ENCODE measurements at regions of chr5 and their contacts with region 1.

Region 1: DNA sequence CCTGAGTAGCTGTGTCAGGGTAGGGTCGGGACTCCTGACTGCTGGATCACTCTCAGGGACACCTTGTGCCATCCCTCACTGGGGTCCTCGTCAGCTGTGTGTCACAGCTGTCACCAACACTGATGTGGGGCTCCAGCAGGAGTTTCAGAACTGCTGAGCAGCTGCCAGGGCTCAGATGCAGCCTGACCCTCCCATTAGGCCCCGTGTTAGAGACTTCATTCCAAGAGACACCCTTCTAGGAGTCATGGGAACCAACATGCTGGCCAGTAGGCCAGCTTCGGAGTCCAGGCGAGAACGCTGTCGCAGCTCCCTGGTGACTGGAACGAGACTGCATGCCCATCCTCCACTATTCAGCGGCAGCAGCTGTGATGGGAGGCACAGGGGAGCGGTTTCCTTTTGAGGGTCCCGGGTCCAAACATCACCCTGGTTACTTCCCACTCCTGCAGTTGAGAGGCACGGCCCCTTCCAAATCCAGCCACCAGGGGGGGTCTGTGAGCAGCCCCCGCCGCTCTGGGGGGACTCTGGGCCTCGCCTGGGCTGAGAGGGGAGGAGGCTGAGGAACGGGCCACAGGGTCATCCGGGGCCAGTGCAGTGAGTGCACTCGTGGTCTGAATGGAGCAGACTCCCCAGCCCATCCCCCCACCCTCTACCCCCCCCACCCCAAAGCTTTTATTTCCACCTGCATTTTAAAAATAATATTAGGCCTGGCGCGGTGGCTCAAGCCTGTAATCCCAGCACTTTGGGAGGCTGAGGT is 12.6 kb upstream of the TCF7 start:
- DNase-seq: peak; percentile 62 to 77 (median 73)
- H3K4me3 ChIP-seq: no peak overlapping the region
- H3K4me3 Mint-ChIP-seq: peak overlapping the region in 6 of 8 donors; percentile 10 to 62 (median 36)
- H3K27ac ChIP-seq: peak overlapping the region; percentile 85
- H3K27ac Mint-ChIP-seq: peak overlapping the region; percentile 59 to 96 (median 88)
- H3K4me1 ChIP-seq: peaks cover 95% of the 10 kb centered on the region
- H3K4me1 Mint-ChIP-seq: peaks cover 62 to 98% (median 82%) of the 10 kb centered on the region in 4 donors
- H3K27me3 ChIP-seq: no peaks in the 10 kb centered on the region
- H3K27me3 Mint-ChIP-seq: no peaks in the 10 kb centered on the region

Region 2: DNA sequence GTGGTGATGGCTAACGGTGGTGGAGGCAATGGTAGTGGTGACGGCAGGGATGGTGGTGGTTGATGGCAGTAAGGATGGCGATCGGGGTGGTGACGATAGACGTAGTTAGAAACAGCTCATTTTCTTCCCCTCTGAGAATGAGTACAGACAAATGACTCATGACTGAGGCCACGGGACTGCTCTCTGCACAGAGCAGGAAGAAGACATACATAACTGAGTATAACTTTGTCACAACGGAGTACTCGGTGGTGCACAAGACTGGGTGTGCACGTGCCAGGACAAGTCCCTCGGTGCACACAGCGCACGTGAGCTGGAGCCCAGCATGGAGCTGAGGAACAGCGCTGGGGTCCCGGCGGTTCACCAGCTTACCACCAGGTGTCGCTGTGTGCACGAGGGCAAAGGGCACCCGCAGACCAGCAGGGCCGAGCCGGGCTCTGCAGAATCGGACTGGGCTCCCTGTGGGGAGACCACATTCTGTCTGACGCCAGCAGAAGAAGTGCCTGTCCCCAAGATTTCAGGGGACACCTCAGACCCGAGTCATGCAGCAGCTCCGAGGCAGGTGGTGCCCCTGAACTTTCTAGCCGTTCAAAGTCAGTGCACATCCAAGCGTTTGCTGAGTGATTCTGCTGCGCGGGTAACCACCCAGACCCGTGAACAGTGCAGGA is 678.1 kb before region 1 on chr5:
- CTCF ChIA-PET with region 1: no interaction called
- POLR2A ChIA-PET with region 1: no interaction called
- intact Hi-C with region 1: no loop called
- DNase-seq: peak; percentile 47 to 57 (median 53)
- H3K4me3 ChIP-seq: no peak overlapping the region
- H3K4me3 Mint-ChIP-seq: peak overlapping the region in 1 of 8 donors; percentile 29
- H3K27ac ChIP-seq: no peak overlapping the region
- H3K27ac Mint-ChIP-seq: no peak overlapping the region
- H3K4me1 ChIP-seq: peaks cover 8% of the 10 kb centered on the region
- H3K4me1 Mint-ChIP-seq: peaks cover 6 to 9% (median 7%) of the 10 kb centered on the region in 4 donors
- H3K27me3 ChIP-seq: no peaks in the 10 kb centered on the region
- H3K27me3 Mint-ChIP-seq: peaks cover 7 to 10% of the 10 kb centered on the region in 2 donors

Region 3: DNA sequence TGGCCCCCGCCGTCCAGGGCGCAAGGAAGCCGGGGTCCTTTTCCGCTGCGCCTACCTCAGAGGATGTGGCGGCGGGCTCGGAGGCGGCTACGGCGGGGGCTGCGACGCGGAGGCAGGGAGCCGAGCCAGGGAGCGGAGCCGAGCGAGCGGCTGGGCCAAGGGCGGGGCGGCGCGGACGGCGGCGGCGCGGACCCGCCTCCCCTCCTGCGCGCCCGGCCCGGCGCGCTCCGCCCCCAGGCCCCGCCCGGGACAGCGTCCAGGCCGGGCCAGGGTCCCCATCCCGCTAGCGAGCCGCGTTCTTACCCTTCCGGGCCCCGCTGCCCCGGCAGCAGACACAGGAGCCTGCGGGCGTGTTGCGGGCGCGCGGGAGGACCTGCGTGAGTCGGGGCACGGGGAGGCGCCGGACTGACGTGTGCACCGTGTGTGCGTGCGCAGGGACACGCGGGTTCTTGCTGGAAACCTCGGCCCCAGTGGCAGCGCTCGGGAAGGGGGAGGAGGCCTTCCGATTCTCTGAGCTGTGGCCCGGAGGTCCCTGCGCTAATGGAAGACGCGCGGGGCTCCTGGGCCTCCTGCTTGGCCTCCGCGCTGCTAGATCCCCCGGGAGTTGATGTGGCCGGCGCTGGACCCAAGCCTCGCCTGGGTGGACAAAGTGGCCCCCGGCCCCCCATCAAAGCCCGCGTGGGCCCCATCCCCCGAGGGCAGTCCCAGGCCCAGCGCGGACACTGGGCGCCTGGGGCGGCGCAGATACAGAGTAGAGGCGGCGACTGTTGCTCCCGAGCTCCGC is 97.1 kb before region 1 on chr5 and contains the start of gene VDAC1:
- CTCF ChIA-PET with region 1: no interaction called
- POLR2A ChIA-PET with region 1: interaction called, 16 read pairs
- intact Hi-C with region 1: no loop called
- DNase-seq: peak; percentile 89 to 95 (median 92)
- H3K4me3 ChIP-seq: peak within 1 kb of the TSS; percentile 61 to 81
- H3K4me3 Mint-ChIP-seq: peak within 1 kb of the TSS; percentile 89 to 99 (median 93)
- H3K27ac ChIP-seq: peak within 1 kb of the TSS; percentile 96
- H3K27ac Mint-ChIP-seq: peak within 1 kb of the TSS; percentile 96 to 99 (median 98)
- H3K4me1 ChIP-seq: peaks cover 49% of the 10 kb centered on the region
- H3K4me1 Mint-ChIP-seq: peaks cover 26 to 50% (median 38%) of the 10 kb centered on the region in 4 donors
- H3K27me3 ChIP-seq: no peaks in the 10 kb centered on the region
- H3K27me3 Mint-ChIP-seq: no peaks in the 10 kb centered on the region
- total RNA-seq, gene VDAC1: 45.1 to 46.4 TPM

Region 4: GRCh38 chr5:134063188-134063820 is 38.6 kb before region 1 on chr5:
- CTCF ChIA-PET with region 1: interaction called, 31 read pairs
- POLR2A ChIA-PET with region 1: interaction called, 4 read pairs
- intact Hi-C with region 1: no loop called
- DNase-seq: no peak
- H3K4me3 ChIP-seq: no peak overlapping the region
- H3K4me3 Mint-ChIP-seq: no peak overlapping the region
- H3K27ac ChIP-seq: no peak overlapping the region
- H3K27ac Mint-ChIP-seq: peak overlapping the region in 2 of 7 donors; percentile 42 to 48
- H3K4me1 ChIP-seq: peaks cover 7% of the 10 kb centered on the region
- H3K4me1 Mint-ChIP-seq: peaks cover 3 to 13% (median 8%) of the 10 kb centered on the region in 4 donors
- H3K27me3 ChIP-seq: no peaks in the 10 kb centered on the region
- H3K27me3 Mint-ChIP-seq: no peaks in the 10 kb centered on the region

Region 5: DNA sequence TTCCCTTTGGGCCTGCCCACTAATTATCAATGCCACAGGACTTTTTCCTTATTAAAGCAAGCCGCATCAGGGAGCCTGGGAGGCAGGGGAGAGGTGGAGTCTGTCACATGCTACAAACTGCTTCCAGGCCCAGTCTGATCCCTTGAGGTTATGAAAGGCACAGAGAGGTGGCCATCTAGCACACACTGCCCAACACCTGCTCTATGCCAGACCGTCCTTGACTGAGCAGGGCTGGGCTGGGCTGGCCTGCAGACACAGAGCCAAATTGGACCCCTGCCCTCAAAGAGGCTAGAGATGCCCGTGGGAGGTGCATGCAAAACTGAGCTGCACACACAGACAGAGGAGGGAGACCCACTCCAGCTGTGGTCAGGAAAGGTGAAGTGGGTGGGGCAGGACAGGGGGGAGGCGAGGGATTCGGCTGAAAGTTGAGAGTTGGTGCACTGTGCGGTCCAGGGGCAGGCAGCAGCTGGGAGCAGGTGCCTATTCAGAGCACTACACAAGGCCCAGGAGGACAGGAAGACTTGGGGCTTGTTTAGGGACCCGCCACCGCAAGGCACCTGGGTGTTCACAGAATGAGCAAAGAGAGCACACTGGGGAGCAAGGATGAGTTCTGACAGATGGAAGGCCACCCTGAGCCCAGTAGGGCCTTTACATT is 23.8 kb before region 1 on chr5:
- CTCF ChIA-PET with region 1: interaction called, 51 read pairs
- POLR2A ChIA-PET with region 1: no interaction called
- intact Hi-C with region 1: no loop called
- DNase-seq: no peak
- H3K4me3 ChIP-seq: no peak overlapping the region
- H3K4me3 Mint-ChIP-seq: peak overlapping the region in 7 of 8 donors; percentile 17 to 76 (median 57)
- H3K27ac ChIP-seq: no peak overlapping the region
- H3K27ac Mint-ChIP-seq: peak overlapping the region; percentile 68 to 98 (median 89)
- H3K4me1 ChIP-seq: peaks cover 59% of the 10 kb centered on the region
- H3K4me1 Mint-ChIP-seq: peaks cover 54 to 77% (median 59%) of the 10 kb centered on the region in 4 donors
- H3K27me3 ChIP-seq: no peaks in the 10 kb centered on the region
- H3K27me3 Mint-ChIP-seq: no peaks in the 10 kb centered on the region

Region 6: GRCh38 chr5:134140530-134141201 is 38.8 kb after region 1 on chr5:
- CTCF ChIA-PET with region 1: no interaction called
- POLR2A ChIA-PET with region 1: no interaction called
- intact Hi-C with region 1: loop called (anchors 1 kb)
- DNase-seq: peak; percentile 52 to 70 (median 57)
- H3K4me3 ChIP-seq: no peak overlapping the region
- H3K4me3 Mint-ChIP-seq: peak overlapping the region in 2 of 8 donors; percentile 20 to 24
- H3K27ac ChIP-seq: peak overlapping the region; percentile 97
- H3K27ac Mint-ChIP-seq: peak overlapping the region; percentile 64 to 98 (median 86)
- H3K4me1 ChIP-seq: peaks cover 59% of the 10 kb centered on the region
- H3K4me1 Mint-ChIP-seq: peaks cover 24 to 84% (median 59%) of the 10 kb centered on the region in 4 donors
- H3K27me3 ChIP-seq: no peaks in the 10 kb centered on the region
- H3K27me3 Mint-ChIP-seq: no peaks in the 10 kb centered on the region

Region 7: GRCh38 chr5:134145779-134146581 is 44.1 kb after region 1 on chr5:
- CTCF ChIA-PET with region 1: no interaction called
- POLR2A ChIA-PET with region 1: no interaction called
- intact Hi-C with region 1: loop called (anchors 1 kb)
- DNase-seq: peak; percentile 74 to 83 (median 77)
- H3K4me3 ChIP-seq: no peak overlapping the region
- H3K4me3 Mint-ChIP-seq: peak overlapping the region in 2 of 8 donors; percentile 26 to 30
- H3K27ac ChIP-seq: no peak overlapping the region
- H3K27ac Mint-ChIP-seq: peak overlapping the region; percentile 11 to 98 (median 89)
- H3K4me1 ChIP-seq: peaks cover 24% of the 10 kb centered on the region
- H3K4me1 Mint-ChIP-seq: peaks cover 26 to 70% (median 44%) of the 10 kb centered on the region in 4 donors
- H3K27me3 ChIP-seq: no peaks in the 10 kb centered on the region
- H3K27me3 Mint-ChIP-seq: no peaks in the 10 kb centered on the region

Measured in CD4-positive, alpha-beta memory T cell (primary cell).